HepG2 (cell line): ENCODE measurements at regions of chr2 and their contacts with region 1.

Region 1: DNA sequence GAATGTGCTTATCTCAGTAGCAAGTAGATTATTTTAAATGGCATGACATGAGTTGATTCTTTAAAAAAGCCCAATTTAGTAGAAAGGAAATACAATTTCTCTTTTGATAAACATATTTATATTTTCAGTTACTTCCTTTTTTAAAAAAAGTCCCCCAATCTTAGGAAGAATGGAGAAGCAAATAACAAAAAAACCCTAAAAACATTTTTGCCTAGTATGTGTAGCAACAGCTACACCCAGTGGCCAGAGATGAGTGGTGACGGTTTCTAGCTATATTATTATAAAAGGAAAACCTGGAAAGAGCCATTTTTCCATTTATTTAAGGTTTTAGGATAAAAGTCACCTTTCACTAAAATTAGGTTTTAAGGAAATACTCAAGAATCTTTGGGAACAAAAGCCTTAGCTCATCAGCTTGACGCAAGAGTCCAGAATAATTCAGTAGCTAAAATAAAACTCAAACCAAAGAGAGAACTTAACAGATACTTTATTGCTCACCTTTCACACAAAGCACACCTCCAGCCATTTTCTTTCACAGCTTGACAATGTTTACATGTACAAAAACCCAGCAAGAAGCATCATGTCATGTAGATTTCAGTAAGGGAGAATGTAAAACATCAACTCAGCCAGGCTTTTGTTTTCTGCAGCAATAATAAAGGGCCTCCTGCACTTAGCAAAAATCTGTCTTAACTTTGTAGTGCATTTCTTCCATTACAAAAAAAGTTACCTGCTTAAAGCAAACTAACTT is 15.7 kb downstream of the FAM98A start:
- DNase-seq: peak; percentile 36
- ATAC-seq: peak; percentile 68
- H3K4me3 ChIP-seq: no peak overlapping the region
- H3K27ac ChIP-seq: no peak overlapping the region
- H3K4me1 ChIP-seq: no peaks in the 10 kb centered on the region
- H3K27me3 ChIP-seq: no peaks in the 10 kb centered on the region
- CTCF ChIP-seq: peak; percentile 66
- EP300 ChIP-seq: no peak
- POLR2A ChIP-seq: no peak
- RAD21 ChIP-seq: peak; percentile 56; the same call in 1 of the 2 replicates

Region 2: GRCh38 chr2:32946314-32947075 is 636.9 kb before region 1 on chr2 and contains the start of gene LTBP1:
- CTCF ChIA-PET with region 1: no interaction called
- POLR2A ChIA-PET with region 1: no interaction called
- in situ Hi-C with region 1: no loop called
- intact Hi-C with region 1: loop called (anchors 5 kb)
- DNase-seq: peak; percentile 42
- ATAC-seq: peak; percentile 96
- H3K4me3 ChIP-seq: peak within 1 kb of the TSS; percentile 27 to 72 (median 54)
- H3K27ac ChIP-seq: no peak within 1 kb of the TSS
- H3K4me1 ChIP-seq: no peaks in the 10 kb centered on the region
- H3K27me3 ChIP-seq: peaks cover 6 to 35% of the 10 kb centered on the region in 2 experiments; a peak in 4 of 5 replicates
- CTCF ChIP-seq: peak; percentile 92
- EP300 ChIP-seq: no peak
- POLR2A ChIP-seq: no peak
- RAD21 ChIP-seq: peak; percentile 84
- total RNA-seq, gene LTBP1: 0.22 and 0.34 TPM in 2 replicates

Region 3: DNA sequence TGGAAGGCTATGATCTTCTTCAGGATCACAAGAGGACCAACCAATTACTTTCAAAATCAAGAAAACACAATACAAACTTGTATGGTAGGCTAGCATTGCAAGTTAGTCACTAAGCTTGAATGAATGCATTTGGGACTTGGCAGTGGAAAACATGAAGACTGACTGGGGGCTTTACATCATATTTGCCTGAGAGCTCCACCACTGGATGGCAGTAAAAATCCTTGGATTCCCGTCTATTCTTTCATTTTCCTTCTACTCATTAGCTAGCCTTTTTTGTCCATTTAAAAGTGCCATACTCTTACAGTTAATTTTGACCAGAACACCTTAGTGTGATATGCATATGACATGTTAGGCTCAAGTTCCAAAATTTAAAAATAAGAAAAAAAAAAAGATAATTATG is 170.4 kb before region 1 on chr2:
- CTCF ChIA-PET with region 1: interaction called, 7 read pairs
- POLR2A ChIA-PET with region 1: no interaction called
- in situ Hi-C with region 1: loop called (anchors 5 kb)
- intact Hi-C with region 1: loop called (anchors 1 kb)
- DNase-seq: peak; percentile 26
- ATAC-seq: peak; percentile 54; the same call in 2 of the 3 replicates
- H3K4me3 ChIP-seq: no peak overlapping the region
- H3K27ac ChIP-seq: no peak overlapping the region
- H3K4me1 ChIP-seq: 0 out of 2 replicates have a peak, but pooled peaks cover 5% of the 10 kb centered on the region
- H3K27me3 ChIP-seq: peaks cover 0 to 4% of the 10 kb centered on the region in 2 experiments; a peak in 1 of 5 replicates
- CTCF ChIP-seq: peak; percentile 48
- EP300 ChIP-seq: no peak
- POLR2A ChIP-seq: no peak
- RAD21 ChIP-seq: no peak

Region 4: DNA sequence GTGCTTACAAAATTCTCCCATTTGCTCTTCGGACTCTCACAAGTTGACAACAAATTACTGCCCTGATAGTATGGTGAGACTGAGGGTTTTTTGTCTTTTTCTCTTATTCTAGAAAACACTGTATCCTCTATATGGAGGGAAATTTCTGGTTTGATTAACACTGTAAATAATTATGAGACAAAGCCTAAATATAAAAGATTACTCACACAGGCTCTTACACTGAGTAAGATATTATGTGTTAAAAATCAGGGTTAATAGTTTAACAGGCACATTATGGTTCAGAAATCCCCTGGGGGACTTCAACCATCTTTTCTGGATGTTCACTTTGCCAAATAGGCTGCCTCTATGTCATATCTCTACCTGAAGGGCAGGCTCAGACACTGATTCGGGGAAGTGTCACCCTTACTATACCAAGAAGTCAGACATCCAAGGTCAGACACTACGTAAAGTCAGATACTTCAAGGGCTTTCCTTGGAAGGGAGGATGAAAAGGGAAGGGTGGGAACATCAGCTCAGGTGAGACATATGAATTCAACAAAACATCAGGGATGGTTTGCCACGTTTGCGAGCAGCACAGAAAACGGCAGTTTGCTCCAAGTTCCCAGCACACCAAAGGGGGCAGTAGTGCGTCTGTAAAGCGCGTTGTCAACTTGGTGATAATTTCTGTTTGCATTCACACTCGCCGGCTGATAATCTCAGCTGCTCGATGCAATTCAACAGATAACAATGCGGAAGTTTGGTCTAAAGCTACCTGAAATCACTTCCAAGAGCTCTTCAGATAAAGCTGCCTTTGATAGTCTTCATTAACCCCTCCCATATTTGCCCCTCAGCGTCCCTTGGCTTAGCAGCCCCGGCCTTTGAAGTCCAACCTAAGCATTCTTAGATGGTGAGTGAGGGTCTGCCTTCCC is 107.9 kb before region 1 on chr2:
- CTCF ChIA-PET with region 1: no interaction called
- POLR2A ChIA-PET with region 1: no interaction called
- in situ Hi-C with region 1: loop called (anchors 5 kb)
- intact Hi-C with region 1: loop called (anchors 5 kb)
- DNase-seq: peak; percentile 61
- ATAC-seq: peak; percentile 91
- H3K4me3 ChIP-seq: peak overlapping the region; percentile 63 to 70 (median 65)
- H3K27ac ChIP-seq: no peak overlapping the region
- H3K4me1 ChIP-seq: peaks cover 22% of the 10 kb centered on the region
- H3K27me3 ChIP-seq: peaks cover 0 to 19% of the 10 kb centered on the region in 2 experiments; a peak in 2 of 5 replicates
- CTCF ChIP-seq: peak; percentile 81
- EP300 ChIP-seq: no peak
- POLR2A ChIP-seq: no peak
- RAD21 ChIP-seq: no peak